ENCODE measurements at regions of chr17 and their contacts with region 1.

Region 1: GRCh38 chr17:49677933-49678847 is at the start of gene SPOP:
- DNase-seq: peak; percentile 99 to 100
- H3K4me3 ChIP-seq: peak within 1 kb of the TSS; percentile 80 to 93
- H3K27ac ChIP-seq: peak within 1 kb of the TSS; percentile 98
- H3K4me1 ChIP-seq: peaks cover 36% of the 10 kb centered on the region
- H3K27me3 ChIP-seq: no peaks in the 10 kb centered on the region
- CTCF ChIP-seq: no peak
- POLR2A ChIP-seq: peak in 1 of 2 donors; percentile 47
- total RNA-seq, gene SPOP: 87.2 TPM

Region 2: DNA sequence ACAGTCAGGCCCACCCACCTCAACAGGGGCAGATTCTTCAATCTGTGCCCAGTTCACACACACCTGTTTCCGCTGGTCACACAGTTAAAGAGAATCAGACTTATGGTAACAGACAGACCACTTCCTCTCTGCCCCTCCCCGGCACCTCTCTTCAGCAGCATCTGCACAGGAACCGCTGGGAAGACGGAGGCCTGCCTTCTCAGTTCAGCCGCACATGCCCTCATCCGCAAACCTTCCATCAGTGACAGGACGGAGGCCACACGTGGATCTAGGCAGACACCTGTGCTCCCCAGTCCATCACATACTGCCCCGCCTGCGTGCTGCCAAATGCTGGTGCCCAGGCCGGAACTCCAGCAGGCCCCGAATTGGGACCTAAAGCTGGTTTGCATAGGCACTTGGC is 273.8 kb before region 1 on chr17:
- intact Hi-C with region 1: no loop called
- DNase-seq: no peak
- H3K4me3 ChIP-seq: no peak overlapping the region
- H3K27ac ChIP-seq: no peak overlapping the region
- H3K4me1 ChIP-seq: peaks cover 5% of the 10 kb centered on the region
- H3K27me3 ChIP-seq: no peaks in the 10 kb centered on the region
- CTCF ChIP-seq: no peak
- POLR2A ChIP-seq: no peak

Region 3: GRCh38 chr17:49575579-49576087 is 102.6 kb before region 1 on chr17 and contains the start of gene NXPH3:
- intact Hi-C with region 1: no loop called
- DNase-seq: peak in 1 of 2 donors; percentile 75
- H3K4me3 ChIP-seq: peak within 1 kb of the TSS; percentile 75 to 80
- H3K27ac ChIP-seq: peak within 1 kb of the TSS; percentile 90
- H3K4me1 ChIP-seq: peaks cover 43% of the 10 kb centered on the region
- H3K27me3 ChIP-seq: no peaks in the 10 kb centered on the region
- CTCF ChIP-seq: peak in 2 of 3 experiments; percentile 32 to 51
- POLR2A ChIP-seq: peak in 1 of 2 donors; percentile 12
- total RNA-seq, gene NXPH3: 18.4 TPM

Region 4: DNA sequence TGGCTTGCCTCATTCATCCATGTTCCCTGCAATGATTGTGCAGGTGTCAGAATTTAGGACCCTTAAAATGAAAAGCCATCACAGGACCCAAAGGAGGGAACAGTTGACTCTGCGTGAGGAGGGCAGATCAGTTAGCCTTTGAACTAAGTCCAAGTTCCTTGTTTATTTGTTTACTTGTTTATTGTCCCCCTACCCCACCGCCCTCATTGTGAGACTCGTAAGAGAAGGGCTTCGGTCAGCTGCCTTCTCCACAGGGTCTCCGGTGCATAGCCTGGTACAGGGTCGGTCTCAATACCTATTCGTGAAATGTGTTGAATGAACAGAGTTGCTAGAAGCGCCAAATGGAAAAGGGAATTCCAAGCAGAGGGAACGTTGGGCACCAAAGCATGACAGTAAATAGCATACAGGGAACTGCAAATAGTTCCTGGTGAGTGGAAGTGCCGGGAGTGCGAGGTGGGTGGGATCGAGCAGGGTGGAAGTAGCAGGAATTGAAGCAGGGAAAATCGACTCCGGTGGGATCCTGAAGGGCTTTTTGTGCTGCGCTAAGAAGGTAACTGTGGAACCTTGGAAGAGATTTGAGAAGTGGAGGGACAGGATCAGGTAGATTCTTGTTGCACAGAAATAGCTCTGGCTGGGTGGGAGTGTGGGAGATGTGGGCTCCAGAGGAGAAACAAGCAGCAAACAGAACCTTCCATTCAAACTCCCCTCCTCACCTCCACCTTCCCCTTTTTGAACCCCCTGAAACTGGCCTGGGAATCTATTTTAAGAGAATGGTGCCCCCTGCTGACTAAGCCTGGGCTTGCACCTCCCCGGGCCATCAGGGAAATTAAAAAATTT is 16.9 kb after region 1 on chr17:
- intact Hi-C with region 1: loop called (anchors 1 kb)
- DNase-seq: no peak
- H3K4me3 ChIP-seq: no peak overlapping the region
- H3K27ac ChIP-seq: no peak overlapping the region
- H3K4me1 ChIP-seq: peaks cover 16% of the 10 kb centered on the region
- H3K27me3 ChIP-seq: no peaks in the 10 kb centered on the region
- CTCF ChIP-seq: peak; percentile 88 to 99 (median 97)
- POLR2A ChIP-seq: no peak

Measured in vagina (tissue), 2 donors.